ENCODE measurements at regions of chr11 and their contacts with region 1.

Region 1: DNA sequence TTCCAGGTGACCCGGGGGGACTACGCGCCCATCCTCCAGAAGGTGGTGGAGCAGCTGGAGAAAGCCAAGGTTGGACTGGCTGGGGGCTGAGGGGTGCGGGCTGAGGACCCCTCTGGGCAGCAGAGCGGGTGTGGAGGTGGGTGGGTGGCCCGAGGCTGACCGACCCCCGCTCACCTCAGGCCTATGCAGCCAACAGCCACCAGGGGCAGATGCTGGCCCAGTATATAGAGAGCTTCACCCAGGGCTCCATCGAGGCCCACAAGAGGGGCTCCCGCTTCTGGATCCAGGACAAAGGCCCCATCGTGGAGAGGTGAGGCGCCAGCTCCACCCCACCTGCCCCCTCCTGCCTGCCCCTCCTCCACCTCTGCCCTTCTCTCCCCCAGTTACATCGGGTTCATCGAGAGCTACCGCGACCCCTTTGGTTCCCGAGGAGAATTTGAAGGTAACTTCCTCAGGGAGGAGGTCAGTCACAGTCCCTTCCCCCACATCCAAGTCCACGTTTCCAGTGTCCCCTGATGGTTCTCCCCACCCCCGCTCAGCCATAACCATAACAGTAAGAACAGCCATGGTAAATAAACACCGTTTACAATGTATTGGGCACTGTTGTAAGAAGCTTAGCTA is 11.2 kb downstream of the DPP3 start:
- DNase-seq: peak in 1 of 2 experiments; percentile 81
- H3K4me3 ChIP-seq: peak overlapping the region in 1 of 4 experiments; percentile 10; a peak in 1 of 8 replicates
- H3K27ac ChIP-seq: no peak overlapping the region
- H3K4me1 ChIP-seq: peaks cover 0 to 12% (median 5%) of the 10 kb centered on the region in 4 experiments; a peak in 4 of 7 replicates
- H3K27me3 ChIP-seq: no peaks in the 10 kb centered on the region
- CTCF ChIP-seq: peak; percentile 64 to 82 (median 72)
- EP300 ChIP-seq: no peak
- POLR2A ChIP-seq: peak in 1 of 2 experiments; percentile 29; a peak in 1 of 3 replicates
- RAD21 ChIP-seq: peak; percentile 36 to 54; a peak in 3 of 4 replicates

Region 2: DNA sequence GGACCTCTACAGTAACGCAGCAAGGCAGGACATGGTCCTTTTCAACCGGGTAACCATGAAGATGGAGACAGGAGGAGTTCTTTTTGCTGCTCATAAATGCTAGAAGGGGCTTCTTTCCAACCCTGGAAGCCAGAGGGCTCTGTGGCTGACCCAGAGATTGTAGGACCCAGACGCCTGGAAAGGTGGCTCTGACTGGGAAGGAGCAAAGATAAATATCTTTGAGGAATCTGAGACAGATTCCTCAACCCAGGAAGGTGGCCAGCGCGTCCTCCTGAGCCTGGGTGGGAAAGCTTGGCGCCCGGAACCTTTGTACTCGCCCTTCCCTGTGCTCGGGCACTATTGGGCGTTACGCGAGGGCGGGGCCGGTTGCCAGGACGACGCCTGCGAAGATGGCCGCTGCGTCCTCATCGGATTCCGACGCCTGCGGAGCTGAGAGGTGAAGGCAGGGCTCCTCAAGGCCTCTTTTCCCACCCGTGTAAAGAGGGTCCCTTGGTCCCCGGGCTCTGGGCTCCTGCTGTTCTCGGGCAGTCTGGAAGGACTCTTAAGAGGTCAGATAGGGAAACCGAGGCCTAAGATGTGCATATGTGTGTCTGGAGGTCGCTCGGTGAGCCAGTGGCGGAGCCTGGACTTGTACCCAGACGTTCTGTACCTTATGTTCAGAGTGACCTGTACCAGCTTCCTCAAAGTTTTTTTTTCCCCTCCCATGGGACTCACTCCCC is 19.0 kb after region 1 on chr11 and contains the start of gene BBS1:
- CTCF ChIA-PET with region 1: interaction called, 23 read pairs
- POLR2A ChIA-PET with region 1: interaction called, 26 read pairs
- DNase-seq: peak; percentile 44 to 97
- H3K4me3 ChIP-seq: peak within 1 kb of the TSS; percentile 61 to 98 (median 97)
- H3K27ac ChIP-seq: peak within 1 kb of the TSS; percentile 63
- H3K4me1 ChIP-seq: peaks cover 0 to 1% (median 0%) of the 10 kb centered on the region in 4 experiments; a peak in 1 of 7 replicates
- H3K27me3 ChIP-seq: no peaks in the 10 kb centered on the region
- CTCF ChIP-seq: no peak
- EP300 ChIP-seq: no peak
- POLR2A ChIP-seq: peak; percentile 60 to 81
- RAD21 ChIP-seq: no peak; a peak in 1 of 4 replicates
- total RNA-seq, gene BBS1: 19.1 and 22.1 TPM in 2 replicates